Cardiac septum (tissue), 1 donor: ENCODE measurements at regions of chr5 and their contacts with region 1.

Region 1: DNA sequence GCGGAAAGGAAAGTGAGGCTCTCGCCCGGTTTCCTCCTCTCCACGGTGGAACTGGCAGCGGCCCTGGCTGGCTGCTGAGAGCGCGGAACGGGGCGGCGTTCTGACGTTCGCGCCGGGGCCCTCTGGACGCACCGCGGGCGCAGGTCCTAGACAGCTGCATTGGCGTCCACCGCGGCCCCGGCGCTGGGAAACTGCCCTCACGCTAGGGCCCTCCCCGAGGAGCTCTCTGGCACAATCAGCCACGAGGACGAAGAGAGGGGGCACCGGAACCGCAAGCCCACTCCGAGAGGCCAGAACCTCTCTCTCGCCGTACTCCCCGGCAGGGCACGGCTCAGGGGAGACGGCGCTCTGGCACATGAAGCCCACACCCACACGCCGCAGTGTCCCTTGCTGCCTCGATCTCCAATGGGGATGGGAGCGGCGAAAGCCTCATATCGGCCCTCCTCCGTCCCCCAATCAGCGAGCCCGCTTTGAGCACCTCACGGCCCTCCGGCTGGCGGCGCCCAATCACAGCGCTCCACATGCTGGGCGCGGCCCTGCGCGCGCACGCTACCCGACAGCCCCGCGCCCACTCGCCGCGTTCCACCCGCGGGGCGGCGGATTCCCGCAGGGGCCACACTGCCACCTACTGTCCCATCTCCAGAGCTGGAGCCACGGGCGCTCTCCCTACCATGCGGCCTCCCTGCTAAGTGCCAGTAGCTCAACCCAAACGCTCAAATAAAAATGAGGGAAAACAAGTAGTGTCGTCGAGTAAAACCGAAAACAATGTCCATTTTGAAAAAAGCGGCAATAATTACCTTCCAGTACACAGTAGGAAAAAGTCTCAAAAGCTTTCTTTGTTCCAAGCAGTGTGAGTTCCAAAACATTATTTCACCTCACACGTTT is 11.8 kb downstream of the MRPS27 start:
- DNase-seq: peak; percentile 99

Region 2: GRCh38 chr5:71922584-71923106 is 385.6 kb before region 1 on chr5:
- intact Hi-C with region 1: loop called (anchors 5 kb)
- DNase-seq: no peak

Region 3: GRCh38 chr5:72018146-72018803 is 289.9 kb before region 1 on chr5:
- intact Hi-C with region 1: loop called (anchors 2 kb)
- DNase-seq: no peak

Region 4: GRCh38 chr5:72134226-72134899 is 173.8 kb before region 1 on chr5:
- intact Hi-C with region 1: loop called (anchors 2 kb)
- DNase-seq: no peak